Activated CD8-positive, alpha-beta memory T cell treated with anti-CD3 and anti-CD28 coated beads, Interleukin-2, amount 10 ng/mL, durations not matched to agents 7 days and 5 days (primary cell): ENCODE measurements at regions of chr20 and their contacts with region 1.

Region 1: GRCh38 chr20:17682103-17682888 is at the start of gene RRBP1:
- DNase-seq: peak; percentile 98
- ATAC-seq: peak; percentile 95
- H3K4me3 Mint-ChIP-seq: peak within 1 kb of the TSS; percentile 76
- H3K27ac Mint-ChIP-seq: peak within 1 kb of the TSS; percentile 84
- H3K4me1 Mint-ChIP-seq: peaks cover 24% of the 10 kb centered on the region
- H3K27me3 Mint-ChIP-seq: peaks cover 37% of the 10 kb centered on the region
- total RNA-seq, gene RRBP1: 55.7 to 59.6 TPM

Region 2: DNA sequence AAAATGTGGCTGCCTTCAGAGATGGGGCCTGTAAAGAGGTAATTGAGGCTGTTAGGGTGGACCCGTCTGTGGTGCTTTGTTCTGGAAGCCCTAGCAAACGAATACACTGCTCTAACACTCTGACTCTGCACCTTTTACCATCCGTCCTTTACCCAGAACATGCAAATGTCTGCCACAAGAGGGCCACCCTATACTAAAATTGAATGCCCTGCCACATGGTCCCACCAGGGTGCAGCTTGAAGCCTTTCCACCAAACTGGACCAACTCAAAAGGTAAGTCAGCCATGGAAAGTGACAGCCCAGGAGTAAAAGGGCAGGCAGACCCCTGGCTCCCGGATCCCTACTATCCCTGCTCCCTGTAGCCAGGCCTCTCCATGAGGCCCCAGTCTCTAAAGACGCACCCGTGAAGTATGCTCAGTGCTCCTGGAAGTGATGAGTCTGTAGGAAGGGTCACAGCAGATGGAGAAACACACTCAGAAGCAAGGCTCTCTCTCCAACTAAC is 145.3 kb before region 1 on chr20:
- CTCF ChIA-PET with region 1: interaction called, 15 read pairs
- DNase-seq: peak; percentile 83
- ATAC-seq: peak; percentile 95
- H3K4me3 Mint-ChIP-seq: no peak overlapping the region
- H3K27ac Mint-ChIP-seq: no peak overlapping the region
- H3K4me1 Mint-ChIP-seq: peaks cover 38% of the 10 kb centered on the region
- H3K27me3 Mint-ChIP-seq: peaks cover 31% of the 10 kb centered on the region

Region 3: GRCh38 chr20:17666481-17666880 is 15.8 kb before region 1 on chr20:
- CTCF ChIA-PET with region 1: interaction called, 13 read pairs
- DNase-seq: no peak
- ATAC-seq: no peak
- H3K4me3 Mint-ChIP-seq: no peak overlapping the region
- H3K27ac Mint-ChIP-seq: peak overlapping the region; percentile 6
- H3K4me1 Mint-ChIP-seq: peaks cover 47% of the 10 kb centered on the region
- H3K27me3 Mint-ChIP-seq: no peaks in the 10 kb centered on the region

Region 4: DNA sequence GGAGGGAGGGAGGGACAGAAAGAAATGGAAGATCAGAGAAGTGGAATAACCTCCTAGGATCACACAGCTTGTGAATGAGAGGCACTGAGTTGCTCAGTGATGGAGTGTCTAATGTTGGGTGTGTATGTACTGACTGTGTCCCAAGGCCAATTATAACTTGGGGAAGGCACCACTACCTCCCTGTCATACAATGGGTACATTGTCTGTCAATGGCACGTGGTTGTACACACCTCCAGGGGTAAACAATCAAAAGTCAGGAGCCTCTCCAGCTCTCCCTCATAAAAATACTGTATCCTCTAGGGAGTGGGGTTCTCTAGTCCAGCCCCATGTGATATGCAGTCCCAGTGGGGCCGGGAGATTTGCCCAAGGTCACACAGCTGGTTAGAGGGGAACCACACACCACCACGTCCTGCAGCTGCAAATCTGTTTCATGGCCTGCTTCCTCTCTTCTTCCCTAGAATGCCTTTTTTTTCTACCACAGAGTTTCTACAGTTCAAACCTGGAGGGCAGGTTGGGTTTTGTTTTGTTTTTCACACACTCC is 173.8 kb after region 1 on chr20:
- CTCF ChIA-PET with region 1: interaction called, 37 read pairs
- DNase-seq: peak; percentile 61
- ATAC-seq: peak; percentile 41
- H3K4me3 Mint-ChIP-seq: no peak overlapping the region
- H3K27ac Mint-ChIP-seq: peak overlapping the region; percentile 22
- H3K4me1 Mint-ChIP-seq: peaks cover 49% of the 10 kb centered on the region
- H3K27me3 Mint-ChIP-seq: peaks cover 25% of the 10 kb centered on the region

Region 5: GRCh38 chr20:17938871-17939619 is 256.7 kb after region 1 on chr20:
- CTCF ChIA-PET with region 1: interaction called, 26 read pairs
- DNase-seq: peak; percentile 80
- ATAC-seq: peak; percentile 92
- H3K4me3 Mint-ChIP-seq: no peak overlapping the region
- H3K27ac Mint-ChIP-seq: peak overlapping the region; percentile 75
- H3K4me1 Mint-ChIP-seq: peaks cover 30% of the 10 kb centered on the region
- H3K27me3 Mint-ChIP-seq: no peaks in the 10 kb centered on the region